Activated T-helper 1 cell treated with anti-CD3 and anti-CD28 coated beads, Interleukin-12 subunit alpha, Interleukin-12 subunit beta, Interleukin-2, Interleukin-4 antibody, amounts not matched to agents 30 ng/mL and 10 ng/mL and 1 ng/mL, durations not matched to agents 14 hours and 24 hours and 36 hours (primary cell): ENCODE measurements at regions of chr2 and their contacts with region 1.

Region 1: GRCh38 chr2:39275016-39275415 is 31.2 kb upstream of the CDKL4 start:
- DNase-seq: no peak
- H3K4me3 Mint-ChIP-seq: no peak overlapping the region
- H3K27ac Mint-ChIP-seq: no peak overlapping the region
- H3K4me1 Mint-ChIP-seq: no peaks in the 10 kb centered on the region
- H3K27me3 Mint-ChIP-seq: no peaks in the 10 kb centered on the region

Region 2: DNA sequence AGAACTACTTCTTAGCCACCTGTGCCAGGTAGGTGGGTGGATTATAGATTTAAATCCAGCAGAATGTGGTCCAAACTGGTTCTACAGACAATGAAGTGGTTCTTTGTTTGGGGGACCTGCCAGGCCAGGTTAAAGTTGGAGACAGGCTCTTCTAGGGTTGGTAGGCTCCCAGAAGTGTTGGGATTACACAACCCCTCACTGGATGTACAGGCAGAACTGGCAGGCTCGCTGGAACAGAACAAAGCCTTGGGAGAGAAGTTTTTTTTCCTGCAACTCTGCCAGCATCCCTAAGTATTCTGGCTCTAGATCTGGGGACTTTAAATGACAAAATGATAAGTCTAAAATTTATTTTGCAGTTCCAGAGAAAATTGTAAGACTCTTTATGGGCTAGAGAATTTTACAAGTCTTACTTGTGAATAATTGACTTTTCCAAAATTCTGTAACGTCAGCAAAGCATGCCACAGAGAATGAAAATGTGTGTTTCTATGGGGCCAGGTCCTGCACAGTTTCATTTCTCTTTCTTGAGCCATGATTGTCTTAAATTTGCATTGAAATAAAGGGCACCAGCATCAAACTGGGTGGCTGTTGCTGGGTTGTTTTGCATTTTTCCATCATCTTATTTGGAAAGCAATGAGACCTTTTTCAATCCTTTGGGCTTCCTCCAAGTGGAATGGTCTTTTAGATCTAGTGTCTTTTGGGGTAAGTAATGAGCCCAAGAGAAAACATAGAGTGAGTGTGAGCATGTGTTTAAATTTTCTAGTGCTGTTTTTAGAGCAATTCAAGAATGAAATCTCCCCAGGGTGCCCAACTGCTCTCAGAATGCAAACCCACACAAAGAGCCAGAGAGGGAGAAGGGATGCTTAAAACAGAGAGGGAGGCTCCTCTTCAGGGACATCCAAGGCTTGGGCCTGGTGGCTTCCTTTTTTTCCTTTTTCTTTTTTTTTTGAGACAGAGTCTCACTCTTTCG is 865.6 kb before region 1 on chr2:
- intact Hi-C with region 1: loop called (anchors 10 kb)
- DNase-seq: no peak
- H3K4me3 Mint-ChIP-seq: no peak overlapping the region
- H3K27ac Mint-ChIP-seq: no peak overlapping the region
- H3K4me1 Mint-ChIP-seq: no peaks in the 10 kb centered on the region
- H3K27me3 Mint-ChIP-seq: peaks cover 3% of the 10 kb centered on the region

Region 3: DNA sequence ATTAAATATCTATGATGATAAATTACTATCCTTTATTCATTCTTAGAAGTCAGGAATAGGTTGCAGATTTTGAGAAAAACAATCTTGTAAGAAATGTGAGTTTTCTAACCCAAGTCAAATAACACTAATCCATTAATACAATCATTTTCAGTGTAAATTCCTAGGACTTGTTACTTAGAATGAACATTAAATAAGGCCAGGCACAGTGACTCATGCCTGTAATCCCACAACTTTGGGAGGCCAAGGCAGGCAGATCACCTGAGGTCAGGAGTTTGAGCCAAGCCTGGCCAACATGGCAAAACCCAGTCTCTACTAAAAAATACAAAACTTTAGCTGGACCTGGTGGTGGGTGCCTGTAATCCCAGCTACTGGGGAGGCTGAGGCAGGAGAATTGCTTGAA is 14.6 kb after region 1 on chr2:
- intact Hi-C with region 1: no loop called
- DNase-seq: no peak
- H3K4me3 Mint-ChIP-seq: no peak overlapping the region
- H3K27ac Mint-ChIP-seq: no peak overlapping the region
- H3K4me1 Mint-ChIP-seq: no peaks in the 10 kb centered on the region
- H3K27me3 Mint-ChIP-seq: no peaks in the 10 kb centered on the region